K562 (cell line): ENCODE measurements at regions of chr1 and their contacts with region 1.

Region 1: DNA sequence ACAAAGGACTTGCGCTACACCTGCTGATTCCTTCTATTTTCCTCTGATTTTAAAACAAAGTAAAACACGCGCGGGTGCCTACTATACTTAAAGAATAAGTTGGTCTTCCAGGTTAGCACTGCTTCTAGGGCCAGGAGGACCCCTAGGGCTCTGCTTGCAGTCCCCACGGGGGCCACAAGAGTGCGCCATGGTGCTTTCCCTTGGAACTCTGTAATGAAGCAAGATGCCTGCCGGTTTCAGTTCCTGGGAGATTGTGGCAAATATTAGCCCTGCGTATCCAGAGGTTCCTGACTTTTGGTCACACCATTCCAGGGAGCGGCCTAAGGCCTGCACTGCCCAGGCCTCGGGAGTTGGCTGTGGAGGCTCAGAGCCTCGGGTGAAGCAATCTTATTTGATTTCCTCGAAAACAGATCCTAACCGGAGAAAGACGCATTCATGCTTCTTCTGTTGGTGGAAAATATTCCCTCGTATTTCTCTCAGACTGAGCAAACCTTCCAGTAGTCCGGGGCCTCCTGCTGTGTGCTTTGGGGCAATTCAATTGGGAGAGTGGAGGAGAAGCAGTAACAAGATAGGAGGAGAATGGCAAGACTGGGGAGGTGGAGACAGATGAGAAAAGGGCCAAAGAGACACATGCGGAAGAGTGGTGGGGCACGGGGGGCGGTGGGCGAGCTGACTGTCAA is 25.3 kb downstream of the ADAM30 start:
- DNase-seq: peak; percentile 85 to 86 (median 85)
- ATAC-seq: peak; percentile 96
- H3K4me3 ChIP-seq: no peak overlapping the region
- H3K27ac ChIP-seq: no peak overlapping the region
- H3K4me1 ChIP-seq: peaks cover 4 to 22% of the 10 kb centered on the region in 2 experiments; a peak in 3 of 5 replicates
- H3K27me3 ChIP-seq: no peaks in the 10 kb centered on the region
- CTCF ChIP-seq: peak; percentile 96 to 99 (median 98)
- EP300 ChIP-seq: no peak; the same call in 1 of the 2 replicates
- POLR2A ChIP-seq: no peak
- RAD21 ChIP-seq: peak; percentile 93 to 97

Region 2: GRCh38 chr1:119467857-119468668 is 403.0 kb before region 1 on chr1:
- CTCF ChIA-PET with region 1: no interaction called
- POLR2A ChIA-PET with region 1: no interaction called
- in situ Hi-C with region 1: no loop called
- intact Hi-C with region 1: no loop called
- DNase-seq: no peak
- ATAC-seq: no peak
- H3K4me3 ChIP-seq: no peak overlapping the region
- H3K27ac ChIP-seq: no peak overlapping the region
- H3K4me1 ChIP-seq: no peaks in the 10 kb centered on the region
- H3K27me3 ChIP-seq: no peaks in the 10 kb centered on the region
- CTCF ChIP-seq: no peak
- EP300 ChIP-seq: no peak
- POLR2A ChIP-seq: no peak
- RAD21 ChIP-seq: no peak

Region 3: DNA sequence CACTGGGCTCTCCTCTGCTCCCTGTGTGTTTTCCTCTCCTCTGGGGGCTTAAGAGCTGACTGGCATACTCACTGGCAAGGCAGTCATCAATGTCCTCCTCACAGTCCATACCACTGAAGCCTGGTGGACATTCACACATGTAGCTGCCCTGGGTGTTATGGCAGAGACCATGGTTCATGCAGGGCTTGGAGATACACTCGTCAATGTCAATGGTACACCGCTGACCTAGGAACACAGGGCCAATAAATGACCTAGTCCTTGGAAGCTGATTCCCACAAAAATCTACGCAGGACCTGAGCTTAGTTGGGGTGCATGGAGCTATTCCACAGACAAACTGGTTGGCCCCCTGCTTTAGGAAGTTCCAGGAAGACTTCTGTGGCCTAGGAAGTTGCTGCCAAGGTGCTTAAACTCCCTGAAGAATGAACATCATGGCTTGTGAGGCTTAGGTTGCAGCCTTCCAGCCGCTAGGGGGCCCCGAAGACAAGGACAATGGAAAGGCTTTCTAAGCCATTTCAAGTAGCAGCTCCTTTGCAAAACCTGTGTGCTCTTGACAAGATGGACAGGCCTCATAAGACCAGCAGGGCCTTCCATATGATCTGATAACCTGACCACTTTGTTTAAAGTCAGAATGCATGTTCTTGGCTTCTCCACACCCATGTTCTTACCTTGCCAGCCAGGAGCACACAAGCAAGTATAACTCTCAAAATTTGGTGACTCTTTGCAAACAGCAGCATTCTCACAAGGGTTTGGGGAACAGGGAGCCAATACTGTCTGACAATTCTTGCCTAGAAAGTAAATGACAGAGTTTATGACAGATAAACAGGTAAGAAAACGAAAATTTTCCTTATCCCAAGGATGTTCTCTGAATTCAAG is 77.5 kb after region 1 on chr1:
- CTCF ChIA-PET with region 1: no interaction called
- POLR2A ChIA-PET with region 1: interaction called, 3 read pairs
- in situ Hi-C with region 1: no loop called
- intact Hi-C with region 1: loop called (anchors 2 kb)
- DNase-seq: peak; percentile 51 to 81 (median 58)
- ATAC-seq: peak; percentile 99
- H3K4me3 ChIP-seq: no peak overlapping the region
- H3K27ac ChIP-seq: no peak overlapping the region
- H3K4me1 ChIP-seq: no peaks in the 10 kb centered on the region
- H3K27me3 ChIP-seq: no peaks in the 10 kb centered on the region
- CTCF ChIP-seq: peak; percentile 83 to 95 (median 94)
- EP300 ChIP-seq: no peak
- POLR2A ChIP-seq: no peak
- RAD21 ChIP-seq: peak; percentile 74 to 91